CD4-positive, alpha-beta T cell (primary cell): ENCODE measurements at regions of chr3 and their contacts with region 1.

Region 1: DNA sequence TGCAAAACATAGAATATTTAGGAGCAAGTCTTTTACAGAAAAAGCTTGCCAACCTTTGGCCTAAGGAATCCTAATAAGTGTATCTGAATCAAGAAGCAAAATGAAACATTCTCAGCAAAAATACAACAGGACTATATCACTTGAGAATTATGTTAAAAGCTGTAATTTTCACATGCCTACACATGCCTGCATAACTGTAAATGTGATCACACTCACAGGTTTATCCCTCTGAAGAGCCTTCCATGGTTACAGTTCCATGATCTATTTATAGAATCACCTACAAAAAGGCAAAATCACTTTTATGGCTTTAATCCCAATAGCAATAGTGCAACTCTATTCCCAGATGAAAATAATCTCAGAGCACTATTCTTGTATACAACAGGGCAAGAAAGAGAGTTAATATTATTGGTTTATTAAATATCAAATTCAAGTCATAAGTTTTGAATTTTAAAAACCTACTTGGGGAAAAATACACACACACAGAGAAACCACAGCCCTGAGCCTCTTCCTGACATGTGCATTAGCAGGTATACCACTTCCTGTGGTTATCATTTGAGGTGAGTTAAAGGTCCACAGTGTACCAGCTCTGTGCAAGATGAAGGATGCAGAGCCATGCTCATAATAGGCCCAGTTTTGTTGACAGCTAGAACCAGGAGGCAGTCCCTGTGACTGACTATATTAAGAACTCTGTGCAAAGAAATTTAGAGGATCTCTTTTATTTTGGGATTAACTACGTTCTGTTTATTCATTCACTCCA is 252.5 kb upstream of the TGFBR2 start:
- DNase-seq: peak in 13 of 14 experiments; percentile 10 to 96 (median 35)
- ATAC-seq: peak; percentile 98
- H3K4me3 ChIP-seq: no peak overlapping the region
- H3K4me3 Mint-ChIP-seq: peak overlapping the region; percentile 76
- H3K27ac ChIP-seq: no peak overlapping the region
- H3K27ac Mint-ChIP-seq: peak overlapping the region; percentile 86
- H3K4me1 ChIP-seq: peaks cover 45% of the 10 kb centered on the region
- H3K4me1 Mint-ChIP-seq: peaks cover 91% of the 10 kb centered on the region
- H3K27me3 ChIP-seq: no peaks in the 10 kb centered on the region
- H3K27me3 Mint-ChIP-seq: no peaks in the 10 kb centered on the region
- CTCF ChIP-seq: no peak

Region 2: GRCh38 chr3:30332196-30333021 is 21.5 kb before region 1 on chr3:
- CTCF ChIA-PET with region 1: no interaction called
- POLR2A ChIA-PET with region 1: interaction called, 4 read pairs
- intact Hi-C with region 1: loop called in 1 of 2 experiments (anchors 2 kb)
- DNase-seq: peak in 8 of 14 experiments; percentile 9 to 51 (median 33)
- ATAC-seq: peak; percentile 95
- H3K4me3 ChIP-seq: no peak overlapping the region
- H3K4me3 Mint-ChIP-seq: peak overlapping the region; percentile 73
- H3K27ac ChIP-seq: no peak overlapping the region
- H3K27ac Mint-ChIP-seq: peak overlapping the region; percentile 94
- H3K4me1 ChIP-seq: peaks cover 5% of the 10 kb centered on the region
- H3K4me1 Mint-ChIP-seq: peaks cover 42% of the 10 kb centered on the region
- H3K27me3 ChIP-seq: no peaks in the 10 kb centered on the region
- H3K27me3 Mint-ChIP-seq: no peaks in the 10 kb centered on the region
- CTCF ChIP-seq: no peak

Region 3: GRCh38 chr3:30628901-30629590 is 275.2 kb after region 1 on chr3:
- CTCF ChIA-PET with region 1: no interaction called
- POLR2A ChIA-PET with region 1: interaction called, 6 read pairs
- intact Hi-C with region 1: loop called in 1 of 2 experiments (anchors 5 kb)
- DNase-seq: peak in 4 of 14 experiments; percentile 43 to 75 (median 73)
- ATAC-seq: peak; percentile 32
- H3K4me3 ChIP-seq: no peak overlapping the region
- H3K4me3 Mint-ChIP-seq: peak overlapping the region; percentile 68
- H3K27ac ChIP-seq: peak overlapping the region; percentile 77 to 90
- H3K27ac Mint-ChIP-seq: peak overlapping the region; percentile 96
- H3K4me1 ChIP-seq: peaks cover 74% of the 10 kb centered on the region
- H3K4me1 Mint-ChIP-seq: peaks cover 100% of the 10 kb centered on the region
- H3K27me3 ChIP-seq: no peaks in the 10 kb centered on the region
- H3K27me3 Mint-ChIP-seq: no peaks in the 10 kb centered on the region
- CTCF ChIP-seq: peak; percentile 40

Region 4: GRCh38 chr3:31227131-31227562 is 873.3 kb after region 1 on chr3:
- CTCF ChIA-PET with region 1: no interaction called
- POLR2A ChIA-PET with region 1: no interaction called
- intact Hi-C with region 1: loop called in 1 of 2 experiments (anchors 10 kb)
- DNase-seq: peak in 3 of 14 experiments; percentile 74 to 87 (median 79)
- ATAC-seq: peak; percentile 74
- H3K4me3 ChIP-seq: no peak overlapping the region
- H3K4me3 Mint-ChIP-seq: peak overlapping the region; percentile 69
- H3K27ac ChIP-seq: peak overlapping the region; percentile 38 to 78
- H3K27ac Mint-ChIP-seq: peak overlapping the region; percentile 85
- H3K4me1 ChIP-seq: peaks cover 97% of the 10 kb centered on the region
- H3K4me1 Mint-ChIP-seq: peaks cover 96% of the 10 kb centered on the region
- H3K27me3 ChIP-seq: no peaks in the 10 kb centered on the region
- H3K27me3 Mint-ChIP-seq: no peaks in the 10 kb centered on the region
- CTCF ChIP-seq: no peak